ENCODE measurements at regions of chr1 and their contacts with region 1.

Region 1: GRCh38 chr1:22131875-22132486 is 10.9 kb downstream of the WNT4 start:
- DNase-seq: peak; percentile 81
- ATAC-seq: peak; percentile 83
- H3K4me3 Mint-ChIP-seq: no peak overlapping the region
- H3K27ac Mint-ChIP-seq: no peak overlapping the region
- H3K4me1 Mint-ChIP-seq: no peaks in the 10 kb centered on the region
- H3K27me3 Mint-ChIP-seq: no peaks in the 10 kb centered on the region

Region 2: GRCh38 chr1:22275721-22276395 is 143.9 kb after region 1 on chr1:
- CTCF ChIA-PET with region 1: interaction called, 3 read pairs
- POLR2A ChIA-PET with region 1: no interaction called
- intact Hi-C with region 1: loop called (anchors 1 to 5 kb)
- DNase-seq: peak; percentile 73
- ATAC-seq: peak; percentile 78
- H3K4me3 Mint-ChIP-seq: no peak overlapping the region
- H3K27ac Mint-ChIP-seq: no peak overlapping the region
- H3K4me1 Mint-ChIP-seq: no peaks in the 10 kb centered on the region
- H3K27me3 Mint-ChIP-seq: peaks cover 12% of the 10 kb centered on the region

Region 3: GRCh38 chr1:22641906-22642636 is 510.1 kb after region 1 on chr1:
- CTCF ChIA-PET with region 1: interaction called, 3 read pairs
- POLR2A ChIA-PET with region 1: no interaction called
- intact Hi-C with region 1: loop called in 1 of 2 experiments (anchors 2 kb)
- DNase-seq: peak; percentile 85
- ATAC-seq: peak; percentile 86
- H3K4me3 Mint-ChIP-seq: no peak overlapping the region
- H3K27ac Mint-ChIP-seq: no peak overlapping the region
- H3K4me1 Mint-ChIP-seq: no peaks in the 10 kb centered on the region
- H3K27me3 Mint-ChIP-seq: peaks cover 9% of the 10 kb centered on the region

Measured in activated CD4-positive, alpha-beta T cell treated with anti-CD3 and anti-CD28 coated beads for 36 hours (primary cell).